ENCODE measurements at regions of chr3 and their contacts with region 1.

Region 1: DNA sequence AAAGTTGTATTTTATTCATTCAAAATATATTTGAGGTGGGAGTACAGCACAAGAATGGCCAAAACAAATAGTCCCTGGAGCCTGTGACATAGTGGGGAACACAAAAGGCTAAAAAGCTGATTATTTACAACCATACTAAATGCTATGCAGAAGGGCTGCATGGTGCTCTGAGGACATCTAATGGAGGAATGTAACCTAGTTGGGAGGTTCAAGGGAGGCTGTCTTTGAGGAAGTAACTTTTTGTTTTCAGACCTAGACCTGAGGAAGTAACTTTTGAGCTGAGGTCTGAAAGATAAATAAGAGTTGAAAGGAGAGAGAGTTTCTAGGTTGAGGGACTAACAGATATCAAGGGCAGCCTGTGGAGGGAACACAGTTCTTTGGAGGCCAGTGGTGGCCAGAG is 34.8 kb upstream of the RASA2 start:
- DNase-seq: no peak
- ATAC-seq: peak; percentile 71

Region 2: GRCh38 chr3:141071681-141072260 is 380.3 kb before region 1 on chr3:
- intact Hi-C with region 1: no loop called
- DNase-seq: no peak
- ATAC-seq: no peak

Region 3: DNA sequence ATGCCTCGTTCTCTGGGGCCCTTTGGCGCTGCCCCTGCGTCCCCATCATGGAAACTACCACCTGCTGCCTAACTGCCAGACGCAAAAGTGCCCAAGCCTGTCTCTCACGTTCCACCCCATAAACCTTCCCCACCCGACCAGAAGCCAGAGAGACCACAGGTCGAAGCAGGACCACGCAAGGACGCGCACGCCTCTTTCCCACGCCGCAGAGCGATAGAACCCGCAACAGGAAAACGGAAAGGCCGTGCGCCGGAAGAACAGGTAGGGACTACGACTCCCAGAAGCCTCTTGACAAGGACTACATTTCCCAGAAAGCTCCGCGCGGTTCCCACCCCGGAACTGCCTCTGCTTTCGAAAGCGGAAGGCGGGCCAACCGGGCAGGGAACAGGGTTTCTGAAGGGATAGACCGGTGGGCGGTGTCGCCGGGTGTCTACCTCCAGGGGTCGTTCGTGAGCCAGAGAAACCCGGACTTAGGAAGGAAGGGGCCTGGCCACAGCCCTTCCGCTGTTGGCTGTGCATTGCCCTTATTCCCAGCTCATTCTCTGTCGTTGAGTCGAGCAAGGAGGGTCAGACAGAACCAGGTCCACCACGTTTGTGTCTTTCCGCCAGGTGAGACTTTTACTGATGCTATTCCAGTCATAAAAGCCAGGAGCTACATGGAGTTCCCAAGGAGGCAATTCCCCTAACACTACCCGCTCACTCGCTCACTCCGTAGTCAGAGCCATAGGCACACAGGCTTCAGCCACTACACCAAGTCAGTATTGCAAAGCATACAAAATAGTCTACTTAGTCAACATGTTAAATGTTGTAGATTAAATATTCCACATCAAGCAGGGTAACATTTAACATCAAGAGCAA is 140.3 kb before region 1 on chr3:
- intact Hi-C with region 1: loop called (anchors 5 kb)
- DNase-seq: peak; percentile 98
- ATAC-seq: peak; percentile 98

Region 4: DNA sequence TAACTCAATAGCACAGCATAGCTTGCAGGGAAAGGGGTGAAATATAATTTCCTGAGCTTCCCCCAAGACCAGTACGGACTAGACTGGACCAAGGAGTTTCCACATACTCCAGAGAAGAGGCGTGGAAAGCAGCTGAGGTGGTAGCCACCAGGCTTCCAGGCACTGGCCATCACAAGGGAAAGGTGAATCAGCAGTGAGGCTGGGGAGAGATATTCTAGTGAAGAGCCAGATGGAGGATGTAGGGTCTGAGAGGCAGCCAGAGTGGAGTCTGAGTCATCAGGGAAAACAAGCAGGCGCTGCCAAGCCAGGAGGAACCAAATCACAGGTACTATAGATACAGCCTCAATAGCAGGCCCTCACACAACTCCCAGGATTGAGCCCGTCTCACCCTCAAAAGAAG is 25.2 kb after region 1 on chr3:
- intact Hi-C with region 1: no loop called
- DNase-seq: no peak
- ATAC-seq: no peak